HepG2 (cell line): ENCODE measurements at regions of chr2 and their contacts with region 1.

Region 1: GRCh38 chr2:12169721-12170120 is 423.3 kb downstream of the LPIN1 start:
- DNase-seq: no peak
- ATAC-seq: no peak
- H3K4me3 ChIP-seq: no peak overlapping the region
- H3K27ac ChIP-seq: no peak overlapping the region
- H3K4me1 ChIP-seq: no peaks in the 10 kb centered on the region
- H3K27me3 ChIP-seq: no peaks in the 10 kb centered on the region
- CTCF ChIP-seq: no peak
- EP300 ChIP-seq: no peak
- POLR2A ChIP-seq: no peak
- RAD21 ChIP-seq: no peak

Region 2: DNA sequence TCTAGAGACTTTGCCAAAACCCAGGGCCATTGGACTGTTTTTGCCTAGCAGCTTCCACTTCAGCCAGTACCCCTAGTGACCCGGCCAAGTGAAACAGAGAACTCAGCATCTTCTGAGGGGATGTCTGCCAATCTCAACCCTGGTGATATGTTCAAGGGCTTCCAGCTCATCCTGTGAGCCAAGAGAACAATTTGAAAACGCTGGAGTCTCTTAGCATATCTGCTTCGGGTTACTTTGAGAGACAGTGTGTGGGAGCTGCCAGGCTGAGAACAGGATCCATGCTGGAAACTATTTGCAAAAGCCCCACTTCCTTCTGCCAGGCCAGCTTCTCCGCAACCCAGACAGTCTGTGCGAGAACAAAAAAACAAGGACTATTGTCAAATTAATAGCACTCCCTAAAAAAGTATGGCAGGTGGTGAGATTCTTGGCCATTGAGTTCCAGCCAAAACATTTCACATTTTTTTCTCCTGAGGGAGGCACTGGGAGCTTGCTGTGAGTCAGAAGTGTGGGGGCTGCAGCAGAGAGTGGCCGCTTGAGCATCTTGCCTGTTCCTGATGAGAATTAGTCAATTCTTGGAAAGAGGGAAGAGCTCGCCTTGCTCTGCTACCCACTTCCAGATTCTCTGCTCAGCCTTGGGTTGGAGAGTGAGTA is 151.4 kb after region 1 on chr2:
- CTCF ChIA-PET with region 1: no interaction called
- POLR2A ChIA-PET with region 1: no interaction called
- in situ Hi-C with region 1: no loop called
- intact Hi-C with region 1: loop called (anchors 10 kb)
- DNase-seq: no peak
- ATAC-seq: no peak
- H3K4me3 ChIP-seq: no peak overlapping the region
- H3K27ac ChIP-seq: no peak overlapping the region
- H3K4me1 ChIP-seq: no peaks in the 10 kb centered on the region
- H3K27me3 ChIP-seq: no peaks in the 10 kb centered on the region; a peak in 1 of 5 replicates
- CTCF ChIP-seq: no peak
- EP300 ChIP-seq: no peak
- POLR2A ChIP-seq: no peak
- RAD21 ChIP-seq: no peak